ENCODE measurements at regions of chr7 and their contacts with region 1.

Region 1: GRCh38 chr7:36048141-36048901 is 104.7 kb upstream of the EEPD1 start:
- DNase-seq: peak; percentile 95
- H3K4me3 Mint-ChIP-seq: peak overlapping the region; percentile 5
- H3K27ac Mint-ChIP-seq: peak overlapping the region; percentile 4
- H3K4me1 Mint-ChIP-seq: peaks cover 12% of the 10 kb centered on the region
- H3K27me3 Mint-ChIP-seq: peaks cover 10% of the 10 kb centered on the region
- CTCF ChIP-seq: no peak

Region 2: GRCh38 chr7:36037121-36037662 is 11.1 kb before region 1 on chr7:
- CTCF ChIA-PET with region 1: interaction called, 7 read pairs
- POLR2A ChIA-PET with region 1: interaction called, 55 read pairs
- intact Hi-C with region 1: no loop called
- DNase-seq: peak; percentile 97
- H3K4me3 Mint-ChIP-seq: peak overlapping the region; percentile 17
- H3K27ac Mint-ChIP-seq: peak overlapping the region; percentile 78
- H3K4me1 Mint-ChIP-seq: peaks cover 44% of the 10 kb centered on the region
- H3K27me3 Mint-ChIP-seq: peaks cover 36% of the 10 kb centered on the region
- CTCF ChIP-seq: no peak